ENCODE measurements at regions of chr3 and their contacts with region 1.

Region 1: DNA sequence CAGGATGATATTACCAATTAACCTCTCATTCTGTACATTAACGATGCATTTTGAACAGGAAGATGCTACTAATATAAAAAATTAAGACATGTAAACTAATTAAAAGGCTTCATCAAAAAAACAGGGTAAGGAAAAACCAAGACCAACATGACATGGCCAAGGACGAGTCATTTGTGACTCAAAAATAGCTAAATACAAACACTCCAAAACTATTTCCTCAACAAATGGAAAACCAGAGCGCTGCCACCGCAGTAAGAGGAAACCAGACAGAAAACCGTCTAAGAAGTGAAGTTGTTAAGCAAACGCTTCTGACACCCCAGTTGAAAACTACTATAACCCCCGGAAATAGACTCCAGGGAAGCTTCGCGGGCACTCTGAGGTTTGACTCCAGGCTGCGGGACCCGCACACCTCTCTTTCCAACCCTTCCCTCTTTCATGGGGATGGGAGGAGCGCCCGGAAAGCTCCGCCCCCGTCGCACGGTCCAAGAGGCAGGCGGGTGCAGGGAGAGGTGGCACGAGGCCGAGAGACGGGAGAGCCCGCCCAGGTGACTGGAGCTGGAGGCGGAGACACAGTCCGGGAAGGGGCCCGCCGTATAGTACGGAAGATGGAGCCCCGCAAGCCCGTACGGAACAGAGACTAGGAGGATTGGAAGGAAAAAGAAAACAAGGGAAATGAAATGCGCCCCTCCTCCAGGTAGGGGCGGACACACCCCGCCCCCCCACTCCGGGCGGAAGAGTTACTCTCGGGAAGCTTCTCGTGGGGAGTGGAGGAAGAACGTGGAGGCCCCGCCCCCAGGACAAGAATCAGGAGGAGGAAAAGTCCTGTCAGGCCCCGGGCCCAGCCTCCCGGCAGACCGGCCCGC is 708 bp downstream of the DCAF1 start:
- DNase-seq: peak; percentile 44 to 88 (median 77)
- ATAC-seq: peak; percentile 46
- H3K4me3 ChIP-seq: peak overlapping the region; percentile 86 to 87
- H3K4me3 Mint-ChIP-seq: peak overlapping the region; percentile 92
- H3K27ac ChIP-seq: peak overlapping the region; percentile 80 to 93
- H3K27ac Mint-ChIP-seq: peak overlapping the region; percentile 99
- H3K4me1 ChIP-seq: peaks cover 16% of the 10 kb centered on the region
- H3K4me1 Mint-ChIP-seq: peaks cover 24% of the 10 kb centered on the region
- H3K27me3 ChIP-seq: no peaks in the 10 kb centered on the region
- H3K27me3 Mint-ChIP-seq: no peaks in the 10 kb centered on the region
- CTCF ChIP-seq: no peak

Region 2: DNA sequence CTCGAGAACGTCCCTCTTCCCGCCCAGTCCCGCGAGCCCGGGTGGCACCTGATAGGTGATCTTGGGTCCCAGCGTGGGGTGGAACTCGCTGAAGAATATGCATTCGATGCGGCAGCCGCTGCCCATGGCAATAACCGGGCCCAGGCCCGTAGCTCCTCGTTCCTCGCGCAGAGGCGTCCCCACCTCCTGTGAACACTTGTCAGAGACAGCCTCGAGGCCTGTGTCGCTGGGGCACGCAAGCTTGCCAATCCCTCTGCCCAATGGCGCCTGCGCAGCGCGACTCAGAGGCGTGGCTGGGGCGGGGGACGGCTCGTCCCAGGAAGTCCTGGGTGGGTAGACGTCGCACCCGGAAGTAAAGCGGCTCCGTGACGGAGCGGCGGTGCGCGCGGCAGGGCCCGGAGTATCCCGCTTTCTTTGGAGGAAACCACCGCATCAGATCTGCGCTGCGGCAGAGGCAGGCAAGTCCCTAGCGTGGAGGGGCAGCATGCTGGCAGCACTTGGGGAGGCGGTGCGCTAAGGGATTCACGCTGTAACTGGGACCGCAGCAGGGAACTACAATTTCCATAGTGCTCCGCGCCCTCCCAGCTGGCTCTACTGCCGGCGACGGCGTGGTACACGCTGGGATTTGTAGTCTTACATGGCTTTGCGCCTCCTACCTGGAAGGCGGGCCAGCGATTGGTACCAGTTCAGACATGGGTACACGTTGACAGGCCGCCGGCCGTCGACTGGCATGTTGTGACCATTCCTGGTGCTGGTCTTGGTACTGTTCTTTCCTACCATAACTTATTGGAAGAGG is 1148.4 kb before region 1 on chr3 and contains the starts of genes CYB561D2 and NPRL2:
- CTCF ChIA-PET with region 1: no interaction called
- POLR2A ChIA-PET with region 1: no interaction called
- intact Hi-C with region 1: loop called in 1 of 2 experiments (anchors 10 kb)
- DNase-seq: peak; percentile 98 to 100 (median 99)
- ATAC-seq: peak; percentile 88
- H3K4me3 ChIP-seq: peak within 1 kb of the TSS; percentile 79
- H3K4me3 Mint-ChIP-seq: peak within 1 kb of the TSS; percentile 98
- H3K27ac ChIP-seq: peak within 1 kb of the TSS; percentile 83 to 94
- H3K27ac Mint-ChIP-seq: peak within 1 kb of the TSS; percentile 99
- H3K4me1 ChIP-seq: peaks cover 54% of the 10 kb centered on the region
- H3K4me1 Mint-ChIP-seq: peaks cover 65% of the 10 kb centered on the region
- H3K27me3 ChIP-seq: no peaks in the 10 kb centered on the region
- H3K27me3 Mint-ChIP-seq: no peaks in the 10 kb centered on the region
- CTCF ChIP-seq: no peak
- total RNA-seq, gene CYB561D2: 24.2 to 24.3 TPM
- total RNA-seq, gene NPRL2: 28.7 to 30.9 TPM

Region 3: GRCh38 chr3:51257870-51258269 is 241.2 kb before region 1 on chr3:
- CTCF ChIA-PET with region 1: no interaction called
- POLR2A ChIA-PET with region 1: no interaction called
- intact Hi-C with region 1: no loop called
- DNase-seq: no peak
- ATAC-seq: no peak
- H3K4me3 ChIP-seq: no peak overlapping the region
- H3K4me3 Mint-ChIP-seq: no peak overlapping the region
- H3K27ac ChIP-seq: no peak overlapping the region
- H3K27ac Mint-ChIP-seq: no peak overlapping the region
- H3K4me1 ChIP-seq: no peaks in the 10 kb centered on the region
- H3K4me1 Mint-ChIP-seq: no peaks in the 10 kb centered on the region
- H3K27me3 ChIP-seq: no peaks in the 10 kb centered on the region
- H3K27me3 Mint-ChIP-seq: no peaks in the 10 kb centered on the region
- CTCF ChIP-seq: no peak

Region 4: DNA sequence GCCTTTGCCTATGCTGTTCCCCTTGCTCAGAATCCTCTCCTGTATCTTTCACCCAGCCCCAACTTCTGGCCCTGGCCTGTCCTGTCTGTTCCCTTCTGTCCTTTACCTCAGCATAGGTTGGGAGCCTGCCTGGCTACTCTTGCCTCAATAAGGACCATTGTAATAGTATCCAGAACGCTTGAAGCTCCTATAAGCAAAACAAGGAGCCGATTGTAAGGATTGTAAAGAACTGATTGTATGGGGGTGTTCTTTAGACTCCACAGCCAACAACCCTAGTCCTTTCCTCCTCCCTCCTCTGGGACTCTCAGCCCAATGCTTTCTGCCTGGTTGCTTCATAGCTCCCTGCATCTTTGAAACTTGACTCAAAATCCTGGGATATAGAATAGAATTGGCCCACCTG is 20.7 kb after region 1 on chr3:
- CTCF ChIA-PET with region 1: interaction called, 12 read pairs
- POLR2A ChIA-PET with region 1: no interaction called
- intact Hi-C with region 1: no loop called
- DNase-seq: no peak
- ATAC-seq: no peak
- H3K4me3 ChIP-seq: no peak overlapping the region
- H3K4me3 Mint-ChIP-seq: no peak overlapping the region
- H3K27ac ChIP-seq: no peak overlapping the region
- H3K27ac Mint-ChIP-seq: no peak overlapping the region
- H3K4me1 ChIP-seq: no peaks in the 10 kb centered on the region
- H3K4me1 Mint-ChIP-seq: peaks cover 4% of the 10 kb centered on the region
- H3K27me3 ChIP-seq: no peaks in the 10 kb centered on the region
- H3K27me3 Mint-ChIP-seq: no peaks in the 10 kb centered on the region
- CTCF ChIP-seq: no peak

Region 5: GRCh38 chr3:51559411-51559888 is 60.3 kb after region 1 on chr3:
- CTCF ChIA-PET with region 1: no interaction called
- POLR2A ChIA-PET with region 1: no interaction called
- intact Hi-C with region 1: no loop called
- DNase-seq: no peak
- ATAC-seq: no peak
- H3K4me3 ChIP-seq: no peak overlapping the region
- H3K4me3 Mint-ChIP-seq: no peak overlapping the region
- H3K27ac ChIP-seq: no peak overlapping the region
- H3K27ac Mint-ChIP-seq: no peak overlapping the region
- H3K4me1 ChIP-seq: no peaks in the 10 kb centered on the region
- H3K4me1 Mint-ChIP-seq: peaks cover 20% of the 10 kb centered on the region
- H3K27me3 ChIP-seq: no peaks in the 10 kb centered on the region
- H3K27me3 Mint-ChIP-seq: no peaks in the 10 kb centered on the region
- CTCF ChIP-seq: no peak

Region 6: GRCh38 chr3:51670823-51671733 is 172.0 kb after region 1 on chr3 and contains the start of gene TEX264:
- CTCF ChIA-PET with region 1: interaction called, 99 read pairs
- POLR2A ChIA-PET with region 1: interaction called, 33 read pairs
- intact Hi-C with region 1: loop called (anchors 1 kb)
- DNase-seq: peak; percentile 85 to 99 (median 95)
- ATAC-seq: peak; percentile 78
- H3K4me3 ChIP-seq: peak within 1 kb of the TSS; percentile 95 to 99
- H3K4me3 Mint-ChIP-seq: peak within 1 kb of the TSS; percentile 89
- H3K27ac ChIP-seq: peak within 1 kb of the TSS; percentile 67 to 92
- H3K27ac Mint-ChIP-seq: peak within 1 kb of the TSS; percentile 88
- H3K4me1 ChIP-seq: peaks cover 58% of the 10 kb centered on the region
- H3K4me1 Mint-ChIP-seq: peaks cover 63% of the 10 kb centered on the region
- H3K27me3 ChIP-seq: no peaks in the 10 kb centered on the region
- H3K27me3 Mint-ChIP-seq: no peaks in the 10 kb centered on the region
- CTCF ChIP-seq: no peak
- total RNA-seq, gene TEX264: 18.7 to 21.0 TPM

Region 7: GRCh38 chr3:51799879-51800749 is 301.0 kb after region 1 on chr3:
- CTCF ChIA-PET with region 1: interaction called, 91 read pairs
- POLR2A ChIA-PET with region 1: interaction called, 4 read pairs
- intact Hi-C with region 1: loop called in 1 of 2 experiments (anchors 1 kb)
- DNase-seq: peak in 4 of 9 experiments; percentile 18 to 70 (median 52)
- ATAC-seq: peak; percentile 29
- H3K4me3 ChIP-seq: no peak overlapping the region
- H3K4me3 Mint-ChIP-seq: no peak overlapping the region
- H3K27ac ChIP-seq: no peak overlapping the region
- H3K27ac Mint-ChIP-seq: no peak overlapping the region
- H3K4me1 ChIP-seq: no peaks in the 10 kb centered on the region
- H3K4me1 Mint-ChIP-seq: peaks cover 17% of the 10 kb centered on the region
- H3K27me3 ChIP-seq: no peaks in the 10 kb centered on the region
- H3K27me3 Mint-ChIP-seq: peaks cover 12% of the 10 kb centered on the region
- CTCF ChIP-seq: peak; percentile 95

Region 8: GRCh38 chr3:53357457-53357856 is 1858.3 kb after region 1 on chr3:
- CTCF ChIA-PET with region 1: no interaction called
- POLR2A ChIA-PET with region 1: no interaction called
- intact Hi-C with region 1: no loop called
- DNase-seq: no peak
- ATAC-seq: no peak
- H3K4me3 ChIP-seq: no peak overlapping the region
- H3K4me3 Mint-ChIP-seq: no peak overlapping the region
- H3K27ac ChIP-seq: no peak overlapping the region
- H3K27ac Mint-ChIP-seq: no peak overlapping the region
- H3K4me1 ChIP-seq: no peaks in the 10 kb centered on the region
- H3K4me1 Mint-ChIP-seq: no peaks in the 10 kb centered on the region
- H3K27me3 ChIP-seq: no peaks in the 10 kb centered on the region
- H3K27me3 Mint-ChIP-seq: peaks cover 3% of the 10 kb centered on the region
- CTCF ChIP-seq: no peak

Measured in CD8-positive, alpha-beta T cell (primary cell).